ENCODE measurements at regions of chr10 and their contacts with region 1.

Region 1: GRCh38 chr10:66058594-66058993 is 867.2 kb upstream of the LRRTM3 start:
- DNase-seq: no peak
- H3K4me3 ChIP-seq: no peak overlapping the region
- H3K27ac ChIP-seq: no peak overlapping the region
- H3K4me1 ChIP-seq: no peaks in the 10 kb centered on the region
- H3K27me3 ChIP-seq: no peaks in the 10 kb centered on the region
- CTCF ChIP-seq: no peak
- POLR2A ChIP-seq: no peak

Region 2: DNA sequence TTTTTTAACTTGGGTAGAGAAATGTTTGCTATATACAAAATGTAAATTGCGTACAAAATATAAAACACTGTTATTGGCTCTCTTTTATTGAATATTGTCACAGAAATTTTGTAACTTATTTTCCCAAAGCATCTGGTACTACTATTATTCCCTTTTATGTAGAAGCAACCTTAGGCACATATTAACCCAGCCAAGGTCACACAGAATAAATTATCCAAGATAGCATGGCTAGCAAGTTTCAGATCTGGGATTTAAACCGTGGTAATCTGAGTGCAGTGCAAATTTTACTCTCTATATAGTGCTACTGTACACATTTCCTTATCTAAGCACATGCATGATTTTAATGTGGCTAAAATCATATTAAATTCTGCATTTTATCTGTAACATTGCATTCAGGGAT is 323.2 kb before region 1 on chr10:
- intact Hi-C with region 1: no loop called
- DNase-seq: no peak
- H3K4me3 ChIP-seq: no peak overlapping the region
- H3K27ac ChIP-seq: no peak overlapping the region
- H3K4me1 ChIP-seq: no peaks in the 10 kb centered on the region
- H3K27me3 ChIP-seq: no peaks in the 10 kb centered on the region
- CTCF ChIP-seq: no peak
- POLR2A ChIP-seq: no peak

Region 3: DNA sequence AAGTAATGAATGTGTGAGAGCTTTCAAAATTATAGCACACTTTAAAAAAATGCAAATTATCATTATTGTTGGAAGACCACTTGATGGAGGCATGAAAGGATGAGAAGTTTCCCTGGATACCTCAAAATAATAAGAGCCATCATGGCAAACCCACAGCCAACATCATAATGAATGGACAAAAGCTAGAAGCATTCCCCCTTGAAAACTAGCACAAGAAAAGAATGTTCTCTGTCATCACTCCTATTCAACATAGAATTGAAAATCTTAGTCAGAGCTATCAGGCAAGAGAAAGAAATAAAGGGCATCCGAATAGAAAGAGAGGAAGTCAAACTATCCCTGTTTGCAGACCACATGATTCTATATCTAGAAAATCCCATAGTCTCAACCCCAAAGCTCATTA is 20.0 kb before region 1 on chr10:
- intact Hi-C with region 1: loop called (anchors 1 kb)
- DNase-seq: no peak
- H3K4me3 ChIP-seq: no peak overlapping the region
- H3K27ac ChIP-seq: no peak overlapping the region
- H3K4me1 ChIP-seq: no peaks in the 10 kb centered on the region
- H3K27me3 ChIP-seq: no peaks in the 10 kb centered on the region
- CTCF ChIP-seq: no peak
- POLR2A ChIP-seq: no peak

Measured in vagina (tissue), 2 donors.